Mucosa of descending colon (tissue), 3 donors: ENCODE measurements at regions of chr14 and their contacts with region 1.

Region 1: DNA sequence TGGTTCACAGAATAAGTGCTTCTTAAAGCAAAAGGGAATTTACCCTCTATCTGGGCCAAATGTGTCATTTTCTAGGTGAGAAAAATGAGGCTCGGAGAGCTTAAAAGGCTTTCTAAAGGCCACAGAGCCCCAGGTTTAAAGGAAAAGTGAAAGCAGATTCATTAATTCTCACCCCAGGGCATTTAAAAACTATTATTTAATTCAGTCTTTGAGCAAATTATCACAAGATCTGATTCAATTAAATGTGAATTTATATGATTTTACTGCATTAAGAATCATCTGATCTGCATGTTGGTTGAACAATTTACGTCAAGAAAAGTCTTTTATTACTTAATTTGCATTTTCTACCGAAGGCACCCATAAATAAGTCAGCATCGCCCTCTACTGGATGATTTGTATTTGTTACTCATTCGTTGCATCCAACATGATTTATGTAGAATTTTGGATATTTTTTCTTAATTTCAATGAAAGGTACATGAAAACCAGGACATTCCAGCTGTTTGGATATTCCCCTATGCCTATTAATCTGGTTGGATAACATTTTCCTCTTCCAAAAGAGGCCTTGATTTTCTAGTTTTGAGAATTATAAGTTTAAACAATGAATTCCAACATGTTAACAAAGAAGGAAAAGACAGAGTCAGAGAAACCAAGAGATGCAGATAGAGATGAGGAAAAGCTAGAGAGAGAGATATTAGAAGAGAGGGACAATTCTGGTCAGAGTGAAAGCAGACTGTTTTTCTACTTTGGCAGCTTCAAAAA is 19.1 kb upstream of the DHRS7 start:
- DNase-seq: peak in 1 of 3 donors; percentile 53
- ATAC-seq: peak; percentile 69
- H3K4me3 ChIP-seq: no peak overlapping the region
- H3K4me1 ChIP-seq: no peaks in the 10 kb centered on the region
- CTCF ChIP-seq: peak; percentile 12

Region 2: GRCh38 chr14:59964251-59965007 is 219.9 kb before region 1 on chr14:
- intact Hi-C with region 1: loop called (anchors 5 to 10 kb)
- DNase-seq: no peak
- ATAC-seq: no peak
- H3K4me3 ChIP-seq: no peak overlapping the region
- H3K4me1 ChIP-seq: no peaks in the 10 kb centered on the region
- CTCF ChIP-seq: no peak

Region 3: DNA sequence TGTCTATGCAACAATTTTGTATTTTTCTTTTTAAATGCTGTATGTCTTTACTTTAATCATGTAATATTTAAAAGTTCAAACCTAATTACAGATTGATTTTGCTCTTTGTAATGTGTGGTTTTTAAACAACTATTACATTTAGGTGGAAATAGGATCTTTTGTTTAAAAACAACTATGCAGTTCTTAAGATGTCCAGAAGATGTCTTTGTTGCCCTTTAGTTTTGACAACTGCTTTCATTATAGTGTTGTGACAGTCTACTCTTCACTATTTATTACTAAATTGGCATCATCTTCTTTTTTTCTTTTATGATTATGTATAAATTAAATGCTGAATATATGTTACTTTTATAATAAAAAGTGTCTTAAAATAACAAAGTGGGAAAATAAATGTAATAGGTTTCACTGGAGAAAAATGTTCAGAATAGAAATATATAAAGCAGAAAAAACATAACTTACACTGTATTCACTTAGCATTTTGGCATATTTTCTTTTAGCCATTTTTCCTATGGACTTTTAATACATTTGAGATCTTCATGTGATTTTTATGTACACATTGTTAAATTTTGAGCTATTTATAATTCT is 119.7 kb before region 1 on chr14:
- intact Hi-C with region 1: loop called (anchors 5 to 10 kb)
- DNase-seq: no peak
- ATAC-seq: no peak
- H3K4me3 ChIP-seq: no peak overlapping the region
- H3K4me1 ChIP-seq: no peaks in the 10 kb centered on the region
- CTCF ChIP-seq: peak; percentile 4